Mammary epithelial cell (primary cell): ENCODE measurements at regions of chr7 and their contacts with region 1.

Region 1: DNA sequence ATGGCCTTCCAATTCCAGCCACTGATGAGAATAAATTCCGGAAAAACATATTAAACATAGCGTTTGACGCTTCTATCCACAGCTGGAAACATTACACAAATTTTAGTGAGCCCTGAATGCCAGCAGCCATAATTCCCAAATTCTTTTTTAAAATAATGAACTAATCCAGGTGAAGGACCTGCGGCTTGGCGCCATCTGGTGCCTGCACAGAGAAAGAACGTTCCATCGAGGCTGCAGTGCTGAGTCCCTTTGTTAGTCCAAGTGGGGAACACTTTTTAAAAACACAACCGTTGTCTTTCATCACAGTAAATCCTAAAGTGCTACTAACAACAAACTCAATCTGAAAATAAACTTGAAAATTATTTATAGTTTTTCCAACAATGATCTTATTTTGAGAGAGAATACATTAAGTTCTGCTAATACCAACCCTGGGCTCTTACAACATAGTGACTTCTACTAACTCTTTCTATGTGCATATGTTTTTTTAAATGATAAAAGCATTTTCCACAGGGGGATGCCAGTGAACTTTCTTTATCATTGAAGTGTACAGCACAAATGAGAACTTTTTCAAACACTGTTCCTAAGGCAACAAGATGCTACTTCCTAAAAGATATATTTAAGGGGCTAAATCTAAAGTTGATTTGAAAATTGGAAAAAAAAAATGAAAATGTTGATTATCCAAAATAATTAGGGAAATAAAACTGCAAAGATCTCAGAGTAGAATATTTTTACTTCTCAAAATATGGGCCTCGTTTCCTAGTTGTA is 166.9 kb upstream of the RNF32 start:
- DNase-seq: no peak
- H3K4me3 ChIP-seq: no peak overlapping the region
- H3K27ac ChIP-seq: no peak overlapping the region
- H3K4me1 ChIP-seq: no peaks in the 10 kb centered on the region
- H3K27me3 ChIP-seq: no peaks in the 10 kb centered on the region
- CTCF ChIP-seq: peak; percentile 52 to 83

Region 2: GRCh38 chr7:155796381-155797261 is 677.0 kb before region 1 on chr7:
- CTCF ChIA-PET with region 1: no interaction called
- dilution Hi-C with region 1: no loop called
- in situ Hi-C with region 1: loop called in 1 of 2 experiments (anchors 25 kb)
- intact Hi-C with region 1: loop called (anchors 1 kb)
- DNase-seq: no peak
- H3K4me3 ChIP-seq: peak overlapping the region in 1 of 3 experiments; percentile 29
- H3K27ac ChIP-seq: no peak overlapping the region
- H3K4me1 ChIP-seq: no peaks in the 10 kb centered on the region
- H3K27me3 ChIP-seq: peaks cover 2% of the 10 kb centered on the region
- CTCF ChIP-seq: peak in 1 of 2 donors; percentile 57

Region 3: GRCh38 chr7:156515911-156516790 is 42.5 kb after region 1 on chr7:
- CTCF ChIA-PET with region 1: no interaction called
- dilution Hi-C with region 1: no loop called
- in situ Hi-C with region 1: no loop called
- intact Hi-C with region 1: no loop called
- DNase-seq: no peak
- H3K4me3 ChIP-seq: no peak overlapping the region
- H3K27ac ChIP-seq: no peak overlapping the region
- H3K4me1 ChIP-seq: no peaks in the 10 kb centered on the region
- H3K27me3 ChIP-seq: no peaks in the 10 kb centered on the region
- CTCF ChIP-seq: no peak